ENCODE measurements at regions of chr18 and their contacts with region 1.

Region 1: DNA sequence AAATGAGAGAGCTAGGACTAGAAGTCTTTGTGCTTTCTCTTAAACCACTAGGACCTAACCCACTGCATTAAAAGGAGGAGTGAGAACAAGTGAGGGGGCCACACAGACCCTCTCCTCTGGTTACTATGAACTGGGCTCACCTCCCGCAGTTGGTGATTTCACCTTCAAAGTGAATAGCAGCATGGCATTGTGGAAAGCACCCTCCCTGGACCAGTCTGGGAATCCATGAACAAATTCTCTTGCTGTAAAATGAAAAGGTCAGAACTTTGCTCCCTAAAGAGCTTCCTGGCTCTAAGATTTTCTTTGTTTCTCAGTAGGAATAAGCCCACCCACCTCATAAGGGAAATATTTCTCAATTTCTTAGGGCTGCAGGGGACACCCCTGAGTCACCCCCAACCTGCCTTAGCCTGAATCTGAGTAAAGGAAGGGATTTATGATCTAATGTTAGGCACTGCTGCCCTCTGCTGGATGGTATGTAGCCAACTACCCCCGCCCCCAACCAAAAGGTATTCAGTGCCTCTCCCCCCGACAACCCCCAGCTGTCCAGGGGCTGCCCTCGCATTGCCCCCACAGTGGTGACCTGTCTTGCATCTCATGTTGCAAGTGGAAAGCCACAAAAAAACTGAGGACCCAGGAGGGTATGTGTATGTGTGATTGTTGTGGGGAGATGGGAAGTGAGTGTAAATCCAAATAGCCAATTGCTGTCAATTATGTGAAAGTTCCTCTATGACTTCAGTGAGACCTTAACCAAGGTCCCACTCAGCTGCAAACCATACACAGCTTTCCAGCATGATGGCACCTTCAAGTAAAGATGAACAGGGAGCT is 230.9 kb upstream of the SLC14A2 start:
- DNase-seq: peak; percentile 72
- ATAC-seq: peak; percentile 66
- H3K4me3 Mint-ChIP-seq: no peak overlapping the region
- H3K27ac Mint-ChIP-seq: no peak overlapping the region
- H3K4me1 Mint-ChIP-seq: peaks cover 3% of the 10 kb centered on the region
- H3K27me3 Mint-ChIP-seq: peaks cover 26% of the 10 kb centered on the region

Region 2: GRCh38 chr18:43620936-43621335 is 1763.4 kb before region 1 on chr18:
- CTCF ChIA-PET with region 1: interaction called, 5 read pairs
- POLR2A ChIA-PET with region 1: no interaction called
- intact Hi-C with region 1: loop called (anchors 1 to 2 kb)
- DNase-seq: no peak
- ATAC-seq: no peak
- H3K4me3 Mint-ChIP-seq: no peak overlapping the region
- H3K27ac Mint-ChIP-seq: no peak overlapping the region
- H3K4me1 Mint-ChIP-seq: no peaks in the 10 kb centered on the region
- H3K27me3 Mint-ChIP-seq: peaks cover 2% of the 10 kb centered on the region

Region 3: DNA sequence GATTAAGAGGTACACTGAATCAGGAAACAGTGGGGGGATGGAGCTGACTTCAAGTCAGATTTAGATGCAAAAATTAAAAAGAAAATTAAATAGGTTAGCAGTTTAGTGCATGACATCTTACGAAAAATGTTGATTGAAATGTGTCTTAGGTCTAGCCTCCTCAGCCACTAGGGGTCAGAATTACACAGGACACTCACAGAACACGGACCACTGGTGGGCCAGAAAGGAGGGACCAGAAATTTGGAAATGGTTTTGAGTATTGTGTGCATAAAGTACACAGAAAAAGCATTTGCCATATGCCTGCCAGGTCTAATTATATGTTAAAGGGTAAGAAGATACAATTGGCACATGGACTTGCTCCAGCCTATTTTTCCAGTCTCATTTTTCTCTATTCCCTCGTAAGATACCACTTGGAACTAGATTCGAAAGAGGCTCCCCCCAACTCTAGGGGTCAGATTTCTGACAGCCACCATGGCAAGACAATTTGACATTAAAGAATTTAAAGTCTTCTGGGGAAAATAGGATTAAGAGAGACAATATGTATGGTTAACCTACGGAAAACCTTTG is 1253.9 kb before region 1 on chr18:
- CTCF ChIA-PET with region 1: no interaction called
- POLR2A ChIA-PET with region 1: no interaction called
- intact Hi-C with region 1: loop called (anchors 5 kb)
- DNase-seq: peak; percentile 14
- ATAC-seq: no peak
- H3K4me3 Mint-ChIP-seq: no peak overlapping the region
- H3K27ac Mint-ChIP-seq: no peak overlapping the region
- H3K4me1 Mint-ChIP-seq: no peaks in the 10 kb centered on the region
- H3K27me3 Mint-ChIP-seq: peaks cover 2% of the 10 kb centered on the region

Region 4: GRCh38 chr18:45275367-45276113 is 108.8 kb before region 1 on chr18:
- CTCF ChIA-PET with region 1: interaction called, 14 read pairs
- POLR2A ChIA-PET with region 1: no interaction called
- intact Hi-C with region 1: loop called (anchors 1 to 2 kb)
- DNase-seq: no peak
- ATAC-seq: no peak
- H3K4me3 Mint-ChIP-seq: no peak overlapping the region
- H3K27ac Mint-ChIP-seq: no peak overlapping the region
- H3K4me1 Mint-ChIP-seq: no peaks in the 10 kb centered on the region
- H3K27me3 Mint-ChIP-seq: no peaks in the 10 kb centered on the region

Region 5: GRCh38 chr18:45370255-45371010 is 13.9 kb before region 1 on chr18:
- CTCF ChIA-PET with region 1: interaction called, 12 read pairs
- POLR2A ChIA-PET with region 1: no interaction called
- intact Hi-C with region 1: no loop called
- DNase-seq: no peak
- ATAC-seq: no peak
- H3K4me3 Mint-ChIP-seq: no peak overlapping the region
- H3K27ac Mint-ChIP-seq: no peak overlapping the region
- H3K4me1 Mint-ChIP-seq: no peaks in the 10 kb centered on the region
- H3K27me3 Mint-ChIP-seq: no peaks in the 10 kb centered on the region

Region 6: DNA sequence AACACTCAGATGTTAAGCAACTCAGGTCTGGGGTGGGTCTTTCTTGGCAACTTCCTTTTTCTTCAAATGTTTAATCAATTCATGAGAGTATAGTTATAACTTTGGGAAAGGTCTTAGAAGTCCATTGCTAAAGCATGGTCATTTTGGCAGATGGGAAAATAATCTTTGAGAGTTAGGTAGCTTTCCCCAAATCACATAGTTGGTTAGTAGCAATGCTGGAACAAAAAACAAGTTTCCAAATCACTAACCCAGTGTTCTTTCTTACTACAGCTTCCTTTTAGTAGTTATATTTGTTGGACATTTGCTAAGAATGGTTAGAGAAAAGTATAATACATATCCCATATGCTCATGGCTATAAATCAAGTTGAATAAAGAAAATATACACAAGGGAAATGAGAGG is 45.7 kb after region 1 on chr18:
- CTCF ChIA-PET with region 1: no interaction called
- POLR2A ChIA-PET with region 1: no interaction called
- intact Hi-C with region 1: no loop called
- DNase-seq: no peak
- ATAC-seq: no peak
- H3K4me3 Mint-ChIP-seq: no peak overlapping the region
- H3K27ac Mint-ChIP-seq: no peak overlapping the region
- H3K4me1 Mint-ChIP-seq: no peaks in the 10 kb centered on the region
- H3K27me3 Mint-ChIP-seq: peaks cover 4% of the 10 kb centered on the region

Measured in activated CD4-positive, alpha-beta T cell treated with anti-CD3 and anti-CD28 coated beads for 36 hours (primary cell).